T-cell (primary cell): ENCODE measurements at regions of chr9 and their contacts with region 1.

Region 1: DNA sequence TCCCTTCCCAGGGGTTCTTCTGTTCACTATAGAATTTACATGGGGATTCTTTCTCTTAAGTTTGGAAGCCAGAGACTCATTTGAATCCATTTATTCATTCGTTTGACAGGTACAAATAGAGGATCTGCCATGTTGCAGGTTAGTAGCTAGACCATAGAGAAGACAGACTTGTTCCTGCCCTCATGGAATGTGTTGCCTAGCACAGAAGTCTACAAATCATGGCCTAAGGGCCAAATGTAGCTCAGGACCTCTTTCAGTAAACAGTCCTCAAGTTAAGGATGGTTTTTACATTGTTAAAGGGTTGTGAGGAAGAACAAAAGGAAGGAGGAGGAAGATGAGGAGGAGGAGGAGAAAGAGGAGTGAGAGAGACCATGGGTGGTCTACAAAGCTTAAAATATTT is 114.7 kb upstream of the SLC44A1 start:
- DNase-seq: no peak
- ATAC-seq: no peak
- H3K4me3 ChIP-seq: no peak overlapping the region
- H3K4me3 Mint-ChIP-seq: peak overlapping the region in 1 of 3 donors; percentile 50
- H3K27ac ChIP-seq: no peak overlapping the region
- H3K27ac Mint-ChIP-seq: no peak overlapping the region
- H3K4me1 ChIP-seq: peaks cover 36 to 48% of the 10 kb centered on the region in 2 experiments
- H3K4me1 Mint-ChIP-seq: peaks cover 53 to 78% (median 61%) of the 10 kb centered on the region in 3 donors
- H3K27me3 ChIP-seq: peaks cover 0 to 3% of the 10 kb centered on the region in 2 experiments
- H3K27me3 Mint-ChIP-seq: no peaks in the 10 kb centered on the region

Region 2: GRCh38 chr9:104984948-104985347 is 144.8 kb before region 1 on chr9:
- CTCF ChIA-PET with region 1: interaction called, 6 read pairs
- POLR2A ChIA-PET with region 1: interaction called in 1 of 2 experiments, 10 read pairs
- DNase-seq: no peak
- ATAC-seq: peak in 1 of 4 experiments; percentile 26
- H3K4me3 ChIP-seq: no peak overlapping the region
- H3K4me3 Mint-ChIP-seq: peak overlapping the region in 1 of 3 donors; percentile 1
- H3K27ac ChIP-seq: no peak overlapping the region
- H3K27ac Mint-ChIP-seq: peak overlapping the region in 1 of 2 donors; percentile 30
- H3K4me1 ChIP-seq: peaks cover 0 to under 1% of the 10 kb centered on the region in 2 experiments
- H3K4me1 Mint-ChIP-seq: peaks cover 9 to 30% (median 28%) of the 10 kb centered on the region in 3 donors
- H3K27me3 ChIP-seq: no peaks in the 10 kb centered on the region
- H3K27me3 Mint-ChIP-seq: peaks cover 0 to 4% of the 10 kb centered on the region in 2 donors

Region 3: DNA sequence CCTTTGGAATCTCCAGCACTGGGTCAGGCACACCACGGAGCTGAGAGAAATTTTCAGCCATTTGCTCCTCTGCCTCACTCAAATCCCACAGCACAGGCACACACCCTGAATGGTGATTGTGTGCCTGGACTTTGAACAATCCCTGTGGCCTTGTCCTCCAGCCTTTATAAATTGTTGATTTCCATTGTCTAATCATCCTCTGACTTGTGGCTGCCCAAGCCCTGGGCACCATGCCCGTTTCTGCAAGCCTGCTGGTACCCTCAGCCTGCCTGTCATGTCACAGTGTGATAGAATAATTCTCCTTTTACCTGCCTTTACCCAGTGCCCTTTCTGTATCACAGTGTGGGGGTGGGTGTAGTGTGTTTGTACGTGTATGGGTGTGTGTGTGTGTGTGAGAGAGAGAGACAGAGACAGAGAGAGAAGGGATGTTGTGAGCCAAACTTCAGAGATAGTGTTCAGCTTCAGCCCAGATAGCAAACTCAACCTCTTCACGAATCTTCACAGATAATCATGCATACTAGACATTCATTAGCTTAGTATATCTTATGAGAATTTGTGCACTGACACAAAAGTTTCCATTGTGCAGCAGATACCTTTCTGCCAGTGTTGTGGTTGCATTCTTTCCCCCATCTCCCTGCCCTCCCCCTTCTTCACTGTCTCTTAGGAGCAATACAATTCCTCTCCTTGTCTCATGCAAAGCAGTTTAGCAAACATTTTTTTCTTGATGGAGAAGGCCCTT is 86.9 kb after region 1 on chr9:
- CTCF ChIA-PET with region 1: no interaction called
- POLR2A ChIA-PET with region 1: no interaction called
- DNase-seq: no peak
- ATAC-seq: no peak
- H3K4me3 ChIP-seq: no peak overlapping the region
- H3K4me3 Mint-ChIP-seq: no peak overlapping the region
- H3K27ac ChIP-seq: no peak overlapping the region
- H3K27ac Mint-ChIP-seq: no peak overlapping the region
- H3K4me1 ChIP-seq: no peaks in the 10 kb centered on the region
- H3K4me1 Mint-ChIP-seq: no peaks in the 10 kb centered on the region
- H3K27me3 ChIP-seq: peaks cover 0 to 6% of the 10 kb centered on the region in 2 experiments
- H3K27me3 Mint-ChIP-seq: peaks cover 2 to 4% of the 10 kb centered on the region in 2 donors

Region 4: GRCh38 chr9:105405514-105406131 is 275.9 kb after region 1 on chr9:
- CTCF ChIA-PET with region 1: interaction called in 1 of 2 experiments, 11 read pairs
- POLR2A ChIA-PET with region 1: interaction called in 1 of 2 experiments, 4 read pairs
- DNase-seq: peak; percentile 13 to 86 (median 57)
- ATAC-seq: peak; percentile 91 to 94 (median 94)
- H3K4me3 ChIP-seq: peak overlapping the region in 1 of 2 donors; percentile 10
- H3K4me3 Mint-ChIP-seq: peak overlapping the region in 2 of 3 donors; percentile 18 to 67
- H3K27ac ChIP-seq: no peak overlapping the region
- H3K27ac Mint-ChIP-seq: no peak overlapping the region
- H3K4me1 ChIP-seq: peaks cover 17 to 27% of the 10 kb centered on the region in 2 experiments
- H3K4me1 Mint-ChIP-seq: peaks cover 28 to 40% (median 31%) of the 10 kb centered on the region in 3 donors
- H3K27me3 ChIP-seq: peaks cover 0 to 37% of the 10 kb centered on the region in 2 experiments
- H3K27me3 Mint-ChIP-seq: peaks cover 45 to 65% of the 10 kb centered on the region in 2 donors